HCT116 (cell line): ENCODE measurements at regions of chr18 and their contacts with region 1.

Region 1: DNA sequence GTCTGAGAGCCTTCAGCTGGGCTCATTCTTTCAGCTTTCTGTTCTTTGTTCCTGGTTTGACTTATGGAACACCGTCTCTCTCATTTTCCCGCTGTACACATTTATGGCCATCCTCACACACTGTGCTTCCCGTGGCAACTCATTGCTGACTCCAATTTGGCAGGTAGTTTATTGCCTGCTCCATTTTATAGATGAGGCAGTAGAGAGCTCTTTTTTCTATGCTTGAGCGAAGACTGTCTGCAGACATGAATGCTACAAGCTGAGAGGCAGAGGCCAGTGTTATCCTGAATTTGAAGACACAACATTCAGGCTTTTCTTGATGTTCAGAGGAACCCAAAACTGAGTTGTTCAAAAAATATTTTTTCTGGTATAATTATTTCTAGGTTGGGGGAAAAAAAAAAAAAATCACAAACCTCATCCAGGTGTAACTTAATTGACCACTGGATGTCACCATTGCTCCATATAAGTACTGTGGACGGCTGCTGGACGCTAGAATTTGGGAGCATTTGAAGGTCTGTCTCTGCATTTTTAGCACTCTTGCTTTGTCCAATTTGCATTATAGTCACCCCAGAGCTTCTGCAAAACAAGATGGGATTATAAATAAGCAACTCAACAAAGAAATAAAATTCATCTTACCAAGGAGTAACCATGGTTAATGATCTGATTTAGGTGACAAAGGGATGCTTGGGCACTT is 83.5 kb downstream of the HRH4 start:
- DNase-seq: peak; percentile 22
- ATAC-seq: peak; percentile 73
- H3K4me3 ChIP-seq: no peak overlapping the region
- H3K27ac ChIP-seq: no peak overlapping the region
- H3K4me1 ChIP-seq: no peaks in the 10 kb centered on the region
- H3K27me3 ChIP-seq: no peaks in the 10 kb centered on the region
- CTCF ChIP-seq: peak; percentile 43 to 75 (median 47); a peak in 5 of 6 replicates
- POLR2A ChIP-seq: no peak
- RAD21 ChIP-seq: peak; percentile 66

Region 2: DNA sequence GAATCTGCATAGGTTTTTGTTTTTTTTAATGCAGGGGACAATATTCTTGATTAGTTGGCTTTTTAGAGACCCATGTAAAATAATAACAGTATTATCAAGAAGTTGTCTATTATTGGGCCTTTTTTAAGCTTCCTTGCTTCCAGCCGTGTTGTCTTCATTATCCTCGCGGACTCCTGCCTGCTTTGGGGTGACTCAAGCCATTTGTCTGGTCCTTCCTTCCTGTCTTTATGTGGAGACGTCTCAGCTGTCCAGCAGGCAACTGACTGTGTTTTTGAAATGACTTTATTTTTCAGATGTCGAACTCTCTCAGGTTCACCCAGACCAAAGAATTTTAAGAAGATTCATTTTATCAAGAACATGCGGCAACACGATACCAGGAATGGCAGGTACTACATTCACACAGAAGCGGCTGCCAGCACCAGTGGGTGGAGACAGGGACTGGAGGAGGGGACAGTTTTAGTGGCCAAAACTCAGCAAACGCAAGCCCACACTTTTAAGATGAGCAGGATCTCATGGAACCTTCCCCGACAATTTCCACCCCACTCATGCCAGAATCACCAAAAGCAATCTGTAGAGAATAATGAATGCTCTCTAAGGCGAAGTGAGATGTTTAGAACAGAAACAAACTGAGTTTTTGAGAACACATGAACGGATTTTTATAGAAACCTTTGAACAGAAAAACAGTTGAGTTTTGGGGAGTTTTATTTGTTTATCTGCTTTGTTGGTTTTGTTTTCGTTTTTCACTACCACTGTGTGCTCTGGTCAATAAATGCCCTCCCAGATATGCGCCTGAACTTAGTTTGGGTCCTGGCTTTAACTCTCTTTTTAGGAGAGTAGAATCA is 1349.6 kb before region 1 on chr18:
- CTCF ChIA-PET with region 1: no interaction called
- POLR2A ChIA-PET with region 1: no interaction called
- RAD21 ChIA-PET with region 1: no interaction called
- intact Hi-C with region 1: no loop called
- DNase-seq: no peak
- ATAC-seq: no peak
- H3K4me3 ChIP-seq: no peak overlapping the region
- H3K27ac ChIP-seq: no peak overlapping the region
- H3K4me1 ChIP-seq: no peaks in the 10 kb centered on the region
- H3K27me3 ChIP-seq: no peaks in the 10 kb centered on the region
- CTCF ChIP-seq: no peak
- POLR2A ChIP-seq: no peak
- RAD21 ChIP-seq: no peak

Region 3: GRCh38 chr18:24262087-24262486 is 281.9 kb before region 1 on chr18:
- CTCF ChIA-PET with region 1: no interaction called
- POLR2A ChIA-PET with region 1: no interaction called
- RAD21 ChIA-PET with region 1: no interaction called
- intact Hi-C with region 1: no loop called
- DNase-seq: no peak
- ATAC-seq: no peak
- H3K4me3 ChIP-seq: no peak overlapping the region
- H3K27ac ChIP-seq: no peak overlapping the region
- H3K4me1 ChIP-seq: no peaks in the 10 kb centered on the region
- H3K27me3 ChIP-seq: no peaks in the 10 kb centered on the region
- CTCF ChIP-seq: no peak
- POLR2A ChIP-seq: no peak
- RAD21 ChIP-seq: no peak

Region 4: DNA sequence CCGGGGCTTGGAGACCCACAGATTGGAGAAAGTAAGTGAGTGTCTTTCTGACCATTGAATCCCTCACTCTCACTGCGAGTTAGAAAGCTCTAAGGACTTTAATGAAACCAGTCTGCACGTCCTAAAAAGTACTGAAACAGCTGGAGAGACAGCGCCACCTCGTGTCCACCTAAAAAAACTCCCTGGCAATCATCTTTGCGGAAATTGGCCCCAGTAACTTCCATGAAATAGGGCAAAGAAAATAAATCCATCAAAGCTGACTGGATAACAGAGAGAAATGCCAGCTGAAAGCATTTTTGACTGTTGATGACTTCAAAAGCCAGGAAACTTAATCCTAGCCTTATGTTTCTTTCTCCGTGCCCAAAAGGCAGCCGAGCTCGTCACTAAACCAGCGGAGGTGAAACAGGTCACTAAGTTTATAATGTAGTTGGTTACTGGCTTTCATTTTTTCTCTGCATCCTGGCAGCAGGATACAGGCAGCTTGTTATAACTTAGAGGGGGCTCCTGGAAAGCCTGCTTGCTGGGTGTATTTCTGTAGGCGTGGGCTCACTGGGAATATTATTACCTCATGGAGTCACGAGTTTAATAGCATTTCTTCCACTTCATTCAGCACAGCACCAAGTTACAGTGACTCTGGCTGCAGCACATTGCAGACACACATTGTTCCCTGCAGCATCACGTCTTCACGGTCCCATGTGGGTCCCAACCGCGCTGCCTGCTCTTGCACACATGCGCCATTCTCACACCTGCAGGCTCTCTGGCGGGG is 183.0 kb after region 1 on chr18:
- CTCF ChIA-PET with region 1: interaction called, 28 read pairs
- POLR2A ChIA-PET with region 1: no interaction called
- RAD21 ChIA-PET with region 1: no interaction called
- intact Hi-C with region 1: loop called (anchors 1 kb)
- DNase-seq: peak; percentile 69
- ATAC-seq: peak; percentile 78
- H3K4me3 ChIP-seq: no peak overlapping the region
- H3K27ac ChIP-seq: no peak overlapping the region
- H3K4me1 ChIP-seq: no peaks in the 10 kb centered on the region
- H3K27me3 ChIP-seq: peaks cover 32% of the 10 kb centered on the region
- CTCF ChIP-seq: peak; percentile 64 to 93 (median 79); a peak in 5 of 6 replicates
- POLR2A ChIP-seq: no peak
- RAD21 ChIP-seq: peak; percentile 84

Region 5: DNA sequence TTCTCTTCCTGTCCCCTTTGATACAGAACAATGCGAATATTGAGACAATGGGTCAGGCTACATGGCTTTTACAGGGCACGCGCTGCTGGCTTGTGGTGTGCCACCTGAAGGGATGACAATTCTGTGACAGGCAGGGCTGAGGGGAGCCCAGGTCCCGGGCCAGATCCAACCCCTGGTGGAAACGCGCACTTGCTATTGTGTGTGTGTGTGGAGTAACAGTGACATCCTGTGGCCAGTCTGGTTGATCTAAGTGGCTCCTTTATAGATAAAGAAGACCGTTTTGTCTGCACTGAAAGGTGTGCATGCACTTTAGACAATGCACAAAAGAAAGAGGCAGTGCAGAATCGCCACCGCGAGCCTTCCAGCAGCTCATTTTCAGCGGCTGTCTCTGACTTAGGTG is 190.1 kb after region 1 on chr18:
- CTCF ChIA-PET with region 1: interaction called, 4 read pairs
- POLR2A ChIA-PET with region 1: no interaction called
- RAD21 ChIA-PET with region 1: no interaction called
- intact Hi-C with region 1: loop called (anchors 2 kb)
- DNase-seq: no peak
- ATAC-seq: peak; percentile 72
- H3K4me3 ChIP-seq: no peak overlapping the region
- H3K27ac ChIP-seq: no peak overlapping the region
- H3K4me1 ChIP-seq: no peaks in the 10 kb centered on the region
- H3K27me3 ChIP-seq: peaks cover 17% of the 10 kb centered on the region
- CTCF ChIP-seq: peak; percentile 7 to 46 (median 25); a peak in 4 of 6 replicates
- POLR2A ChIP-seq: no peak
- RAD21 ChIP-seq: peak; percentile 45; the same call in 1 of the 2 replicates

Region 6: DNA sequence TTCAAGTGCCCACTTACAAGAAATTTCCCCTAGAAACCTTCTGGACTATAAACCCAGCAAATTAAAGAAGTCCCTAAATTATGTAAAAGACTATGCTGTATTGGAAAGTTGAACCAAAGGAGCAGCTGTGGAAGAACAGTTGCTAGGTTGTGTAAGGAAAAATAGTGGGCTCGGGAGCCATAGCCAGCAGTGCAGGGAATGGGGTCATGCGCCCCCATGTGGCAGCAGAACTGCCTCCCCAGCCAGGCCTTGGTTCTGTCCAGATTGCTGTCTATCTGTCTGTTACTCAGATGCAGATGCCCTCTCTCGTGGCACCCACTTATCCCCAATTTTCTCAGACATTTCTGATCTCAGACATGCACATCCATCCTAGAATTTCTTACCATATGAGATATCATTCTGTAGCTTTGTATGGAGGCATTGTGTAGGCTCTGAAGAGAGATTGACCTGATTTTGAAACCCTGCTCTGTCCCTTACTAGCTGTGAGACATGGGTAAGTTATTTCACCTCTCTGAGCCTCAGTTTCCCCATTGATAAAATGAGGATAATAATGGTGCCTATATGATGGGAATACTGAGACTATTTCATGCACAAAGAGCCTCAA is 1288.2 kb after region 1 on chr18:
- CTCF ChIA-PET with region 1: no interaction called
- POLR2A ChIA-PET with region 1: no interaction called
- RAD21 ChIA-PET with region 1: no interaction called
- intact Hi-C with region 1: loop called (anchors 2 kb)
- DNase-seq: peak; percentile 6
- ATAC-seq: peak; percentile 93
- H3K4me3 ChIP-seq: no peak overlapping the region
- H3K27ac ChIP-seq: no peak overlapping the region
- H3K4me1 ChIP-seq: no peaks in the 10 kb centered on the region
- H3K27me3 ChIP-seq: peaks cover 9% of the 10 kb centered on the region
- CTCF ChIP-seq: peak; percentile 38 to 93 (median 89); a peak in 4 of 6 replicates
- POLR2A ChIP-seq: no peak
- RAD21 ChIP-seq: peak; percentile 63